ENCODE measurements at regions of chr9 and their contacts with region 1.

Region 1: GRCh38 chr9:29740518-29740917 is 2167.2 kb upstream of the C9orf72 start:
- ATAC-seq: no peak
- H3K4me3 ChIP-seq: no peak overlapping the region
- H3K27ac ChIP-seq: no peak overlapping the region
- H3K4me1 ChIP-seq: no peaks in the 10 kb centered on the region

Region 2: DNA sequence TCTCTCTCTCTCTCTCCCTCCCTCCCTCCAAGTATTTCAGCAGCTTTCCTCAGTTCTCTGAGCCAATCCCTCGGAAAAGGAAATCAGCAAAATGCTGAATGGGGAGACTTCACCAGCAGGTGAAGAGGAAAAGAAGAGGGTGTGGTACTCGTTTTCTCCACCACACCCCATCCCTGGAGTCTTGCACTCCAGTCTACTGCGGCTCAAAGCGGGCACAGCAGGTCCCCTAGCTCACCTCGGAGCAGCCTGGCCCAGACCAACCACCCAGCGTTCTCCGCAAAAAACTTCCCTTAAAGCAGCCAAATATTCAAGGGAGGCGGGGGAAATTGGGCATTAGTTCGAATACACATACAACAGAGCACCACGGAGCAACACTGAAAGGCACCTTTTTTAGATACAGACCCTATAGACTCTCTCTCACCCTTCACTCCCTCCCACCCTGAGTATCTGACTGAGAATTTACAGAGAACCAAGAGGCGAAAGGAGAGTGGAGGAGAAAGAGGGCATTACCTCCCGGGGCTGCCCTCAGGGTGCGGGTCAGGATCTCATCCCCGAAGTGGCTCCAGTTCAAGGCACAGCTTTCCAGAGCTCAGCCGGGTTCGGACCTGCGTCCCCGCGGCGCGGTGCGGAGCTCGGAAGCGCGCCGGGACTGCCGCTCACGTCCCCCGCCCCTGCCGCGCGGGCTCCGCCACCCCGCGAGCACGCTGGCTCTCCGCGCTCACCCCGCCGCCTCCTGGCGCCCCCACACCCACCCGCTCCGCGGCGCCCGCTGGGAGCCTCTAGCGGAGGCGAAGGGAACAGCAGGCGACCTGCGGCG is 528.7 kb before region 1 on chr9:
- in situ Hi-C with region 1: no loop called
- ATAC-seq: peak; percentile 60 to 81 (median 75)
- H3K4me3 ChIP-seq: peak overlapping the region; percentile 56 to 69 (median 64)
- H3K27ac ChIP-seq: no peak overlapping the region
- H3K4me1 ChIP-seq: no peaks in the 10 kb centered on the region

Region 3: DNA sequence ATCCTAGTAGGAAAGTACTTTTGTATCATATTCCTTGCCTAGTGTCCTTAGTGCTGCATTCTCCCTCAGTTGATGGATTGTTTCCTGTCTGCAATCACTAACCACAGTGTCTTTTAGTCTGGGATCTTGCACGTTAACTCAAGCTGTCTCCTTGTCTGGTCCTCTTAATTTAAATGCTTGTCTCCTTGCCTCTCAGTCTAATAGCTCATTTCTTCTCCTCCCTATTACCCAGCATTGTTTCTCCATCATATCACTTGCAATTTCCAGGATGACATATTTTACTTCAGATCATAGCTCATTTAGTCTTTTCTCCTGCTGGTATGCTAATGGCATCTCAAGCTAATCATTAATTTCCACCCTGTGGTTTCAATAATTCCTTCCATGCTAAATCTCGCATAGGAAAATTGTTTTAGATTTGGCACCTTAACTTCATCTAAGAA is 115.2 kb before region 1 on chr9:
- in situ Hi-C with region 1: loop called in 1 of 9 experiments (anchors 25 kb)
- ATAC-seq: peak in 5 of 8 experiments; percentile 67 to 87 (median 83)
- H3K4me3 ChIP-seq: no peak overlapping the region
- H3K27ac ChIP-seq: no peak overlapping the region
- H3K4me1 ChIP-seq: peaks cover 0 to 11% of the 10 kb centered on the region in 2 donors

Region 4: DNA sequence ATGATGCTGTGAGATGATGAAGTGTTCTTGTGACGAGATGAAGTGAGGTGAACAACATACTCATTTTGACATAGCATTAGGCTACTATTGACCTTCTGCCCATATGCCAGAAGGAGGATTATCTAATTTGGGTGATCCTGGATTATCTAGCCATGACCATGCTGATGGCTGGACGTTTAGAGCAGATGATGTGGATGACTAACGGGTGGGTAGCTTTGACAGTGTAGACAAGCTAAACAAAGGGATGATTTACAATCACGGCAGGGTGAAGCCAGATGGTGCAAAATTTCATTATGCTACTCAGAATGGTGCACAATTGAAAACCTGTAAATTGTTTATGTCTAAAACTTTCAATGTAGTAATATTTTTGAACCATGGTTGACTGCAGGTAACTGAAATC is 240.5 kb after region 1 on chr9:
- in situ Hi-C with region 1: no loop called
- ATAC-seq: peak in 2 of 8 experiments; percentile 55 to 61
- H3K4me3 ChIP-seq: no peak overlapping the region
- H3K27ac ChIP-seq: no peak overlapping the region
- H3K4me1 ChIP-seq: no peaks in the 10 kb centered on the region